Prostate gland (tissue), 2 donors: ENCODE measurements at regions of chr10 and their contacts with region 1.

Region 1: GRCh38 chr10:28179006-28179742 is 123.7 kb downstream of the MPP7 start:
- DNase-seq: peak; percentile 36
- H3K4me3 ChIP-seq: no peak overlapping the region
- H3K27ac ChIP-seq: peak overlapping the region; percentile 37 to 54
- H3K4me1 ChIP-seq: no peaks in the 10 kb centered on the region
- H3K27me3 ChIP-seq: no peaks in the 10 kb centered on the region
- CTCF ChIP-seq: peak; percentile 43 to 86 (median 75)
- POLR2A ChIP-seq: no peak

Region 2: GRCh38 chr10:27998254-27999004 is 180.7 kb before region 1 on chr10:
- intact Hi-C with region 1: loop called (anchors 5 kb)
- DNase-seq: peak; percentile 8
- H3K4me3 ChIP-seq: peak overlapping the region; percentile 45 to 46
- H3K27ac ChIP-seq: peak overlapping the region; percentile 61 to 74
- H3K4me1 ChIP-seq: no peaks in the 10 kb centered on the region
- H3K27me3 ChIP-seq: no peaks in the 10 kb centered on the region
- CTCF ChIP-seq: no peak
- POLR2A ChIP-seq: no peak

Region 3: DNA sequence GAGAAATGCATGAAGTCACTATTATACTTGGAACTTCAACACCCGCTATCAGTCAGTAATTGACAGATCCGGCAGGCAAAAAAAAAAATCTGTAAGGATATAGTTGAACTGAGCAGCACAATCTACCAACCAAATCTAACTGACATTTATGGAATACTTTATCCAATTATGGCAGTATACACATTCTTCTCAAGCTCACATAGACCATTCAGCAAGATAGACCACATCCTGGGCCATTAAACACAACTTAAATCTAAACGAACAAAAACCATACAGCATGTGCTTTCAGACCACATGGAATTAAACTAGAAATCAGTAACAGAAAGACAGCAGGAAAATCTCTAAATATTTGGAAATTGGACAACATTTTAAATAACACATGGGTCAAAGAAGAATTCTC is 11.0 kb after region 1 on chr10:
- intact Hi-C with region 1: no loop called
- DNase-seq: no peak
- H3K4me3 ChIP-seq: no peak overlapping the region
- H3K27ac ChIP-seq: no peak overlapping the region
- H3K4me1 ChIP-seq: no peaks in the 10 kb centered on the region
- H3K27me3 ChIP-seq: no peaks in the 10 kb centered on the region
- CTCF ChIP-seq: no peak
- POLR2A ChIP-seq: no peak

Region 4: DNA sequence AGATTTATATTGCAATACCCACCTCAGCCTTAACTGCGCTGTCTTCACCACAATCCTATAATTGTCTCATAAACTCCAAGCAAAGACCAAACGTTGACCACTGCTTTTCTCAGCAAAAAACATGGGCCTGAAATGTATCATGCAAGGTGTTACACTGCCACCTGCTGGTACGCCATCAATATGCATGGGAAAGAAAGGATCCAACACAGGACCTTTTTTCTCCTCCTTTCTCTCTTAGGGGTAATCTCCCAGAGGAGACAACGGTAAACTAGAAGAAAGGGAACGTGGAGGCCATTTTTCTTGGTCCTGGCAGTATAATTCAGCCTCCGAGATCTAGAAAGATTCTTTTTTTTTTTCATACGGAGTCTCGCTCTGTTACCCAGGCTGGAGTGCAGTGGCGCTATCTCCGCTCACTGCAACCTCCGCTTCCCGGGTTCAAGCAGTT is 202.8 kb after region 1 on chr10:
- intact Hi-C with region 1: no loop called
- DNase-seq: peak; percentile 85
- H3K4me3 ChIP-seq: no peak overlapping the region
- H3K27ac ChIP-seq: no peak overlapping the region
- H3K4me1 ChIP-seq: no peaks in the 10 kb centered on the region
- H3K27me3 ChIP-seq: no peaks in the 10 kb centered on the region
- CTCF ChIP-seq: peak; percentile 95 to 99 (median 97)
- POLR2A ChIP-seq: no peak